CD4-positive, alpha-beta T cell (primary cell): ENCODE measurements at regions of chr1 and their contacts with region 1.

Region 1: GRCh38 chr1:48677306-48678287 is 99.1 kb downstream of the BEND5 start:
- DNase-seq: peak in 10 of 14 experiments; percentile 4 to 50 (median 14)
- ATAC-seq: no peak
- H3K4me3 ChIP-seq: no peak overlapping the region
- H3K4me3 Mint-ChIP-seq: no peak overlapping the region
- H3K27ac ChIP-seq: no peak overlapping the region
- H3K27ac Mint-ChIP-seq: no peak overlapping the region
- H3K4me1 ChIP-seq: no peaks in the 10 kb centered on the region
- H3K4me1 Mint-ChIP-seq: no peaks in the 10 kb centered on the region
- H3K27me3 ChIP-seq: peaks cover 0 to 9% of the 10 kb centered on the region in 2 experiments
- H3K27me3 Mint-ChIP-seq: peaks cover 28% of the 10 kb centered on the region
- CTCF ChIP-seq: peak; percentile 54

Region 2: GRCh38 chr1:48654606-48655210 is 22.9 kb before region 1 on chr1:
- CTCF ChIA-PET with region 1: no interaction called
- POLR2A ChIA-PET with region 1: no interaction called
- intact Hi-C with region 1: no loop called
- DNase-seq: no peak
- ATAC-seq: no peak
- H3K4me3 ChIP-seq: no peak overlapping the region
- H3K4me3 Mint-ChIP-seq: no peak overlapping the region
- H3K27ac ChIP-seq: no peak overlapping the region
- H3K27ac Mint-ChIP-seq: no peak overlapping the region
- H3K4me1 ChIP-seq: no peaks in the 10 kb centered on the region
- H3K4me1 Mint-ChIP-seq: no peaks in the 10 kb centered on the region
- H3K27me3 ChIP-seq: no peaks in the 10 kb centered on the region
- H3K27me3 Mint-ChIP-seq: peaks cover 9% of the 10 kb centered on the region
- CTCF ChIP-seq: no peak

Region 3: DNA sequence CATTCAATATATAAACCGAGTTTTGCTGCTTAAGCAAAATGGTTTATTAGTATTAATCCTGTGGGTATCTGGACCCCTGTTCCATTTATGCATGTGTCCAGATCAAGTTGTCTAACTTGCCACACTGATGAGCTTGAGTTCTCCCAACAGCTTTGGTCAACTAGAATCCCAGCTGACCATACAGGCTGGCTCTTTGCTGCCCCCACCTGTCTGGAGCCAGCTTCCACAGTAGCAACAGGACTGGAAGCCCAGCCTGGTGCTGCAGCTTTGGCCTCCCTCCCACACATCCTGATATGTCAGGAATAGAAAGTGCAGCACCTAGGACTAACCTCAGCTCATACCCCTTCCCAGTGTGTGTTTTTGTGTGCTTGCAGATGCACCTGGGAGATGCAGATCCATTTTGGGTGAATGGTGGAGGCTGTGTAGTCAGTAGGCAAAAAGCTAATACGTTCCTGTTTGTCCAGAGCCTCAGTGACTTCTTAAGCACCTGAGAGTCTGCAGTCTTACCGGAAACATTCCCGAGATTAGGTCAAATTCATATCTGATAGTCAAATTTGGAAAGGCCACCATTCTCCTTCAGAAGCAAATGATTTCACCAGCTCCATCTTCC is 140.0 kb after region 1 on chr1:
- CTCF ChIA-PET with region 1: no interaction called
- POLR2A ChIA-PET with region 1: no interaction called
- intact Hi-C with region 1: loop called in 1 of 2 experiments (anchors 5 kb)
- DNase-seq: peak in 4 of 14 experiments; percentile 0 to 24 (median 11)
- ATAC-seq: no peak
- H3K4me3 ChIP-seq: no peak overlapping the region
- H3K4me3 Mint-ChIP-seq: no peak overlapping the region
- H3K27ac ChIP-seq: no peak overlapping the region
- H3K27ac Mint-ChIP-seq: no peak overlapping the region
- H3K4me1 ChIP-seq: no peaks in the 10 kb centered on the region
- H3K4me1 Mint-ChIP-seq: no peaks in the 10 kb centered on the region
- H3K27me3 ChIP-seq: no peaks in the 10 kb centered on the region
- H3K27me3 Mint-ChIP-seq: peaks cover 11% of the 10 kb centered on the region
- CTCF ChIP-seq: no peak

Region 4: DNA sequence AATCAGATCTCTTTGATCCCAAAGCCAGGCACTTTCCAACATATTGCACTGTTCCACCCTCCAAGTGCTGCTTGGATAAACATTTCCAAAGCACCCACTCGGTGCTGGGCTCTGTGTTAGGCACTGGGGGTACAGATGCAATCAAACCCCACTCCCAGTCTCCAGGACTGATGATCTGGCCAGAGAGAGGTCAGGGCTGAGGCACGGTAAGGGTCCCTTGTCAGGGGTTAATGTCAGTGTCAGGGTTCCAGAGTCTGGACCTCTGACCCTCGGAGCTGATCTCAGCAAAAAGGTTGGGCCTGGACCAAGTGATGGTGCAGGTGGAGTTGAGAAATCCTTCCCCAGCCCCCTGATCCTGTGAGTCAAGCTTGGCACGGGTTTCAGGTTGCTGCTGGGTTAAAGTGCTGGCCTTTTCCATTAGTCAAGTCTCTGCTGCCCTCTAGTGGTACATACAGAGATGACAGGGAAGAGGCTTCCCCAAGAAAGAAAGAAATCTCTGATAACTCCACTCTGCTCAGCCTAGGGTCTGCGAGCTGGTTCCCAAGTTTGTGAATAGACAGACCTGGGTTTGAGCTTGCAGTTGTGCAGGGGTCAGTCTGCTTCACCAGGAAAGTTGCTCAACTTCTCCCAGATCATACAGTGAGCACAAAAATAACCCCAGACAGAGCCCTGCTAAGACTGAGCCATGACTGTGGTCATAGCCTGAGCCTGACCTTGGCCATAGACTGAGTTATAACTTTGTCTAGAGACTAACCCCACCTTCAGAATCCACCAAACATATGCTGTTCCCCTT is 1671.0 kb after region 1 on chr1:
- CTCF ChIA-PET with region 1: no interaction called
- POLR2A ChIA-PET with region 1: no interaction called
- intact Hi-C with region 1: loop called in 1 of 2 experiments (anchors 10 kb)
- DNase-seq: peak in 9 of 14 experiments; percentile 7 to 66 (median 30)
- ATAC-seq: no peak
- H3K4me3 ChIP-seq: no peak overlapping the region
- H3K4me3 Mint-ChIP-seq: no peak overlapping the region
- H3K27ac ChIP-seq: no peak overlapping the region
- H3K27ac Mint-ChIP-seq: no peak overlapping the region
- H3K4me1 ChIP-seq: no peaks in the 10 kb centered on the region
- H3K4me1 Mint-ChIP-seq: no peaks in the 10 kb centered on the region
- H3K27me3 ChIP-seq: peaks cover 0 to 7% of the 10 kb centered on the region in 2 experiments
- H3K27me3 Mint-ChIP-seq: peaks cover 33% of the 10 kb centered on the region
- CTCF ChIP-seq: peak; percentile 70